ENCODE measurements at regions of chr20 and their contacts with region 1.

Region 1: DNA sequence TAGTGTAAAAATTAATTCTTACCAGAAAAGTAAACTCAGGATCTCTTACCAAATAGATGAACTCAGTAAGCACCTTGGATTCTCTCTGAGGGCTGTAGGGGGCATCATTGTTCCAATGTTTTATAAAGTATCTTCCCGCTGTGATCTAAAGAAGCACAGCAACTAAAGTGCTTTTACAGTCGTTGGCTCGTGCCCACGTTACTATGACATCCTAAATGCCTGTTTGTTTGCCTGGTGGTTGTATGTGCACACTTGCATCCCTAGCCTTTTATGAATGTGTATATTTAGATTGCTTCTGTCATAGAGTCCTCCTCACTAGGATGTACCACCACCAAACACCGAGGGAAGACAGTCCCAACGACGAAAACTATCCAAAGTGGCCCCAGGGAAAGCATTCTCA is 34.5 kb downstream of the SLX4IP start:
- DNase-seq: peak in 1 of 2 donors; percentile 84
- H3K4me3 ChIP-seq: peak overlapping the region in 1 of 2 donors; percentile 26
- H3K27ac ChIP-seq: no peak overlapping the region
- H3K4me1 ChIP-seq: peaks cover 4 to 44% of the 10 kb centered on the region in 2 donors
- H3K27me3 ChIP-seq: no peaks in the 10 kb centered on the region
- CTCF ChIP-seq: peak; percentile 57 to 68 (median 64)

Region 2: DNA sequence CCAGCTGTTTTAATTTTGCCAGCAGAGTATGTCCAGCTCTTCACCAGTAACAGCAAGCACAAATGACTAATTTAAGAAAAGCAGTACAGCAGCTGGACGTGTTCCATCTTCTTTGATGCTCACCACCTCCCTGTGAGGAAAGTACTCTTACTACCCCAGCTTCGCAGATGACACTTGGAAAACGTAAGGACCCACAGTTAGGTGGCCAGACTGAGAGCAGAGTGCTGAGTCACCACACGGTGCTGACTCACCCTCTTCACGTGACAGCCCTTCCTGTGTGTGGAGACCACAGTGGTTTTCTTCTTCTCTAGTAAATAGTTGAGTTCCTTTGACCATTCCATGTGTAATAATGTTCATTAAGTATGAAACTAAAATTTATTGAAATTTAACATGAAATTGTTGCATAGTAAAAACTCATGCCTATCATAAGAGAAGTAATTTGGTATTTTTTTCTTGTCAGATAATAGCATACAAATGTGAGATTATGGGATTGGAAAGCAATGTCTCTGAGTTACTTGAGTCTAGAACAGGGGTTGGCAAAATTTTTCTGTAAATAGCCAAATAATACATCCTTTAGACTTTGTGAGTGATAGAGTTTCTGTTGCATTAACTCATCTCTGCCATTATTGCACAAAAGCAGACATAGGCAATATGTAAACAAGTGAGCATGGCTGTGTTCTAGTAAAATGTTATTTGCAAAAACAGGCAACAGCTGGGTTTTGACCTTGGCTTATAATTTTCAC is 42.1 kb after region 1 on chr20:
- intact Hi-C with region 1: loop called (anchors 2 kb)
- DNase-seq: peak; percentile 76 to 95
- H3K4me3 ChIP-seq: no peak overlapping the region
- H3K27ac ChIP-seq: peak overlapping the region; percentile 66 to 77
- H3K4me1 ChIP-seq: peaks cover 16 to 35% of the 10 kb centered on the region in 2 donors
- H3K27me3 ChIP-seq: no peaks in the 10 kb centered on the region
- CTCF ChIP-seq: no peak

Region 3: DNA sequence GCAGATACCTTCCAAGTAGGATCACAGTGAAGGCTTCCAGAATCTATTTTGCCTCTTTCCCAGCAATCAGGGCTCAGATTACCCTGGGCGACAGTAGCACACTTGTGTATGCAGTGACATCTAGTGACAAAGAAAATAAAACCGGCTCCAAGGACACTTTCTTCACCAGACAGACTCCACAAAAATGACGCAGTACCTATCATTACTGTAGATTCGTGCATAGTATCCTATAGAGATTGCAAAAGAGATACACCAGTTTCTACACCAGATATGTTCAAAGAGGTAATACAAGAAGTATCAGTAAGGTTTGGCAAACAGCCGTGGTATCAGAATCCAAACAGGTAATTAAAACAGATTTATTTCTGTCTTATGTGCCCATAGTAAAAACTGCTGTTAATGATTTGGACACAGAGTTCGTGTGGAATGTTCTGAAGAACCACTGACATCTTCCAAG is 804.6 kb after region 1 on chr20:
- intact Hi-C with region 1: loop called (anchors 2 kb)
- DNase-seq: peak in 1 of 2 donors; percentile 69
- H3K4me3 ChIP-seq: no peak overlapping the region
- H3K27ac ChIP-seq: no peak overlapping the region
- H3K4me1 ChIP-seq: peaks cover 0 to 3% of the 10 kb centered on the region in 2 donors
- H3K27me3 ChIP-seq: no peaks in the 10 kb centered on the region
- CTCF ChIP-seq: peak; percentile 58 to 77 (median 58)

Region 4: DNA sequence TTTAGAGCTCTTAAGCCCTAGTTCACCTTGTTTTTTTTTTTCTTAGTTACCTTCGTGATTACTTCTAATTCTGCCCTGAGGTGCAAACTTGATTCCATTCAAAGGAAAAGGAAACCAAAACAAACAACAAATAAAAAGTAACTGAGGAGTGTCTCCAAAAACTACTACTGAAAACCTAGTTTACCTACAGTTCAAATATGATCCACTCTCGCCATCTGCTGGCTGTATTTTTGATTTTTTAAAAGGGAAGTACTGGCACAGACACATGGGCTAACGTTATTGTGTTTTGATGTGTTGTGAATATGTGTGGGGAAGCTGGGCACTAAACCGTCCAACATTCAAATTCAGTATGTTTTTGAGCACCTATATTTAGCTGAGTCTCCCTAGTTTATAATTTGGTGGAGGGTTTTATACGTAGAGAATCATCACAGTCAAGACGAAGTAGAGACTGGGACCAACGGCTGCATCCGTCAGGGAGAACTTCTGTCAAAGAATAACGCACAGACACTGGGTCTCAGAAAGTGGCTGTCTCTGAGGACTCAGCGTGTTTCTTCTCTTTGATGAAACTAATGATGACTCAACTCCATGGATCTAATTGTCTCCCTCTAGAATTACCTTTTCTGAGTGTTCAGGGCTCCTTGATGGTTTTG is 1074.6 kb after region 1 on chr20:
- intact Hi-C with region 1: loop called (anchors 5 kb)
- DNase-seq: peak in 1 of 2 donors; percentile 62
- H3K4me3 ChIP-seq: peak overlapping the region; percentile 31 to 39
- H3K27ac ChIP-seq: no peak overlapping the region
- H3K4me1 ChIP-seq: peaks cover 0 to 2% of the 10 kb centered on the region in 2 donors
- H3K27me3 ChIP-seq: no peaks in the 10 kb centered on the region
- CTCF ChIP-seq: peak; percentile 43 to 64 (median 52)

Measured in ascending aorta (tissue), 2 donors.